ENCODE measurements at regions of chr2 and their contacts with region 1.

Region 1: GRCh38 chr2:44354761-44355160 is 6.5 kb downstream of the PREPL start:
- DNase-seq: no peak
- ATAC-seq: no peak
- H3K4me3 ChIP-seq: no peak overlapping the region
- H3K4me3 Mint-ChIP-seq: no peak overlapping the region
- H3K27ac ChIP-seq: no peak overlapping the region
- H3K27ac Mint-ChIP-seq: no peak overlapping the region
- H3K4me1 ChIP-seq: peaks cover 0 to 7% of the 10 kb centered on the region in 2 experiments
- H3K4me1 Mint-ChIP-seq: peaks cover 53 to 60% (median 58%) of the 10 kb centered on the region in 3 donors
- H3K27me3 ChIP-seq: no peaks in the 10 kb centered on the region
- H3K27me3 Mint-ChIP-seq: no peaks in the 10 kb centered on the region

Region 2: GRCh38 chr2:45759310-45759851 is 1404.6 kb after region 1 on chr2:
- CTCF ChIA-PET with region 1: interaction called in 1 of 2 experiments, 10 read pairs
- POLR2A ChIA-PET with region 1: no interaction called
- DNase-seq: no peak
- ATAC-seq: no peak
- H3K4me3 ChIP-seq: no peak overlapping the region
- H3K4me3 Mint-ChIP-seq: no peak overlapping the region
- H3K27ac ChIP-seq: no peak overlapping the region
- H3K27ac Mint-ChIP-seq: no peak overlapping the region
- H3K4me1 ChIP-seq: no peaks in the 10 kb centered on the region
- H3K4me1 Mint-ChIP-seq: peaks cover 0 to 11% (median 2%) of the 10 kb centered on the region in 3 donors
- H3K27me3 ChIP-seq: no peaks in the 10 kb centered on the region
- H3K27me3 Mint-ChIP-seq: no peaks in the 10 kb centered on the region